ENCODE measurements at regions of chr11 and their contacts with region 1.

Region 1: GRCh38 chr11:35165423-35166368 is 26.7 kb downstream of the CD44 start:
- DNase-seq: peak; percentile 95
- H3K4me3 Mint-ChIP-seq: peak overlapping the region; percentile 55
- H3K27ac Mint-ChIP-seq: peak overlapping the region; percentile 94
- H3K4me1 Mint-ChIP-seq: peaks cover 97% of the 10 kb centered on the region
- H3K27me3 Mint-ChIP-seq: no peaks in the 10 kb centered on the region

Region 2: GRCh38 chr11:34997952-34998528 is 167.7 kb before region 1 on chr11:
- CTCF ChIA-PET with region 1: interaction called, 14 read pairs
- POLR2A ChIA-PET with region 1: interaction called, 3 read pairs
- DNase-seq: no peak
- H3K4me3 Mint-ChIP-seq: no peak overlapping the region
- H3K27ac Mint-ChIP-seq: peak overlapping the region; percentile 37
- H3K4me1 Mint-ChIP-seq: peaks cover 25% of the 10 kb centered on the region
- H3K27me3 Mint-ChIP-seq: no peaks in the 10 kb centered on the region

Region 3: GRCh38 chr11:35047179-35047578 is 118.5 kb before region 1 on chr11:
- CTCF ChIA-PET with region 1: interaction called, 3 read pairs
- POLR2A ChIA-PET with region 1: interaction called, 10 read pairs
- DNase-seq: peak; percentile 63
- H3K4me3 Mint-ChIP-seq: no peak overlapping the region
- H3K27ac Mint-ChIP-seq: peak overlapping the region; percentile 74
- H3K4me1 Mint-ChIP-seq: peaks cover 74% of the 10 kb centered on the region
- H3K27me3 Mint-ChIP-seq: peaks cover 4% of the 10 kb centered on the region

Region 4: GRCh38 chr11:35096723-35097122 is 69.0 kb before region 1 on chr11:
- CTCF ChIA-PET with region 1: no interaction called
- POLR2A ChIA-PET with region 1: no interaction called
- DNase-seq: no peak
- H3K4me3 Mint-ChIP-seq: no peak overlapping the region
- H3K27ac Mint-ChIP-seq: no peak overlapping the region
- H3K4me1 Mint-ChIP-seq: peaks cover 23% of the 10 kb centered on the region
- H3K27me3 Mint-ChIP-seq: peaks cover 12% of the 10 kb centered on the region

Region 5: DNA sequence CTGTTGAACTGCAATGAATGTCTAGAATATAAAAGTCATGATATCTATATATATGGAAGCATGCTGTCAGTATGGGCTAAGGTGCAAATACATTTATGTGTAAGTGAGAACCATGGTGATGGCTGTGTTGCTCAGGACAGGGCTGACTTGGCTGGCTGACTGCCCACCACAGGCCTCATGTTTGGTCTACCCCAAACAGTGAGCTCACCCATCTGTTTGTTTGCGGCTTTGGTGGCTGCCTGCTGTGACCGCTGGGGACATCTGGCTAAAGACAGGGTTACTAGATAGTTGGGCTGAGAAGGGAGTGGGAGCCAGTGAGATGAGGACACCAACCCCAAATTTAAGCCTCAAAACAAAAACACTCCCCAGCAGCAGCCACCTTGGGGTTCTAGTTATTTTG is 20.4 kb before region 1 on chr11:
- CTCF ChIA-PET with region 1: interaction called, 62 read pairs
- POLR2A ChIA-PET with region 1: interaction called, 634 read pairs
- DNase-seq: peak; percentile 55
- H3K4me3 Mint-ChIP-seq: peak overlapping the region; percentile 70
- H3K27ac Mint-ChIP-seq: peak overlapping the region; percentile 87
- H3K4me1 Mint-ChIP-seq: peaks cover 82% of the 10 kb centered on the region
- H3K27me3 Mint-ChIP-seq: no peaks in the 10 kb centered on the region

Region 6: DNA sequence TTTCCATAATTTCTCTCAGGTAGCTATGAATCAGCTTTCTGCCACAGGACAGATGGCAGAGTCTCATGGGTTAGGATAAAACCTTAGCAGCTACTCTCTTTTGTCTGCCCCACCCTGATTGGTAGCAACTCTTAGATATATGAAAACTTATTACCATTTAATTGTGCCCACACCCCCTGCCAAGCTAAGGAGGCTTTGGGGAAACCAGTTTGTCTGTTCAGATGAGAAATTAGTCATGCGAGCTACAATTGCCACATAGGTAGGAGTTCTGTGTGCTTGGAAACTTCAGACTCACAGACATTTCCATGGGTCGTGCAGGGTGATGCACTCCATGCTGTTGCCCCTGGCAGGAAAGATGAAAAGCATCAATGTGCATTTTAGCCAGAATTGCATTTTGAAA is 13.2 kb after region 1 on chr11:
- CTCF ChIA-PET with region 1: interaction called, 40 read pairs
- POLR2A ChIA-PET with region 1: interaction called, 186 read pairs
- DNase-seq: no peak
- H3K4me3 Mint-ChIP-seq: no peak overlapping the region
- H3K27ac Mint-ChIP-seq: peak overlapping the region; percentile 31
- H3K4me1 Mint-ChIP-seq: peaks cover 88% of the 10 kb centered on the region
- H3K27me3 Mint-ChIP-seq: no peaks in the 10 kb centered on the region

Region 7: DNA sequence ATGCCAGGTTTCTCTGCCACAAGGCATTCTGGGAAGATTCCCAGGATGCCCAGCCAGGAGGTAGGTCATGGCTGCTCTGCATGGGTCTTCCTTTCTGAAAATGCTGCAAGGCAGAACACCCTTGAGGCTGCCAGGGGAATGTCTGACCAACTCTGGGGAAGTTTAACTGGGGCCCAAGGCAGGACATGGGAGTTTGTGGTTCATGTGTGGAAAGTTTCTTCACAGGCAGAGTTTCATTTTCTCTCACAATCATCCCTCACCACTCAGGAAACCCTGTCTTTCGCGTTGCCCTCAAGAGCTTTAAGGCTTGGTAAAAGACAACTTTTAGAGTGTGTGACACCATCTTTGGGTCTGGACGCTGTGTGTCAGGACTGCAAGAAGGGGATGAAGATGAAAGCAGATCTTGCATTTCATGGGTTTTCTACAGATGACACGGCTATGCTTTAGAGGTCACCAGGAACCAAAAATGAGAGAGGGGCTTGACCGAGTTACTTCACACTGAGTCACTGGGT is 106.8 kb after region 1 on chr11:
- CTCF ChIA-PET with region 1: no interaction called
- POLR2A ChIA-PET with region 1: no interaction called
- DNase-seq: peak; percentile 62
- H3K4me3 Mint-ChIP-seq: peak overlapping the region; percentile 37
- H3K27ac Mint-ChIP-seq: peak overlapping the region; percentile 84
- H3K4me1 Mint-ChIP-seq: peaks cover 48% of the 10 kb centered on the region
- H3K27me3 Mint-ChIP-seq: peaks cover 15% of the 10 kb centered on the region